Heart right ventricle (tissue), 16 donors: ENCODE measurements at regions of chr3 and their contacts with region 1.

Region 1: GRCh38 chr3:58217209-58217811 is 6.5 kb upstream of the DNASE1L3 start:
- DNase-seq: peak; percentile 62 to 75
- ATAC-seq: peak; percentile 90 to 98 (median 94)
- H3K4me3 ChIP-seq: peak overlapping the region in 1 of 10 donors; percentile 9
- H3K27ac ChIP-seq: peak overlapping the region in 8 of 10 donors; percentile 3 to 65 (median 38)
- H3K4me1 ChIP-seq: peaks cover 5 to 32% (median 21%) of the 10 kb centered on the region in 9 donors
- H3K27me3 ChIP-seq: peaks cover 0 to 2% (median 0%) of the 10 kb centered on the region in 7 donors
- CTCF ChIP-seq: peak; percentile 25 to 80 (median 65)

Region 2: GRCh38 chr3:58188173-58188564 is 29.1 kb before region 1 on chr3:
- intact Hi-C with region 1: loop called in 2 of 10 experiments (anchors 1 to 2 kb)
- DNase-seq: no peak
- ATAC-seq: no peak
- H3K4me3 ChIP-seq: no peak overlapping the region
- H3K27ac ChIP-seq: peak overlapping the region in 5 of 10 donors; percentile 33 to 59 (median 50)
- H3K4me1 ChIP-seq: peaks cover 0 to 26% (median 18%) of the 10 kb centered on the region in 9 donors
- H3K27me3 ChIP-seq: no peaks in the 10 kb centered on the region
- CTCF ChIP-seq: no peak